ENCODE measurements at regions of chr2 and their contacts with region 1.

Region 1: GRCh38 chr2:38315707-38316333 is 61.3 kb downstream of the ATL2 start:
- DNase-seq: peak; percentile 58 to 64
- ATAC-seq: peak; percentile 93 to 94
- H3K4me3 ChIP-seq: no peak overlapping the region
- H3K27ac ChIP-seq: no peak overlapping the region
- H3K4me1 ChIP-seq: no peaks in the 10 kb centered on the region
- CTCF ChIP-seq: peak; percentile 96
- EP300 ChIP-seq: no peak
- POLR2A ChIP-seq: no peak
- RAD21 ChIP-seq: peak; percentile 86 to 92

Region 2: DNA sequence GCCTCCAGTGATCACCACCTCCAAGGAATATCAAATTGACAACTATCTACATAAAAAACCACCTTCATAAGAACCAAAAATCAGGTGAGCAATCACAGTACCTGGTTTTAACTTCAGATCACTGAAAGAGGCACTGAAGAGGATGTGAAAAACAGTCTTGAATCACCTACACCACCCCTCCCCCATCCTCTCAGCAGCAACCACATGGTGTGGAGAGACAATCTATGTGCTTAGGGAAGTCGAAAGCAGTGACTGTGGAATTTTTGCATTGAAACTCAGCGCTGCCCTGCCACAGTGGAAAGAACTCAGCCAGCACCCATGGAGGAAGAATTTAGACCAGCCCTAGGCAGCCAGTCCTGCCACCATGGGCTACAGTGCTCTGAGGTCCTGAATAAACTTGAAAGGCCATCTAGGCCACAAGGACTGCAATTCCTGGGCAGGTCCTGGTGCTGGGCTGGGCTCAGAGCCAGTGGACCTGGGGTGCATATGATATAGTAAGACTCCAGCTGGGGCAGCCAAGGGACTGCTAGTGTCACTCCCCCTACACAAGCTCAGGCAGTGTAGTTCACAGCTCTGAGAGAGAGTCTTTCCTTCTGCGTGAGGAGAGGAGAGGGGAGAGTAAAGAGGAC is 14.4 kb before region 1 on chr2:
- CTCF ChIA-PET with region 1: interaction called, 11 read pairs
- POLR2A ChIA-PET with region 1: no interaction called
- DNase-seq: no peak
- ATAC-seq: peak; percentile 19 to 59; a peak in 3 of 6 replicates
- H3K4me3 ChIP-seq: no peak overlapping the region
- H3K27ac ChIP-seq: no peak overlapping the region
- H3K4me1 ChIP-seq: peaks cover 9% of the 10 kb centered on the region
- CTCF ChIP-seq: no peak
- EP300 ChIP-seq: no peak
- POLR2A ChIP-seq: no peak
- RAD21 ChIP-seq: no peak

Region 3: DNA sequence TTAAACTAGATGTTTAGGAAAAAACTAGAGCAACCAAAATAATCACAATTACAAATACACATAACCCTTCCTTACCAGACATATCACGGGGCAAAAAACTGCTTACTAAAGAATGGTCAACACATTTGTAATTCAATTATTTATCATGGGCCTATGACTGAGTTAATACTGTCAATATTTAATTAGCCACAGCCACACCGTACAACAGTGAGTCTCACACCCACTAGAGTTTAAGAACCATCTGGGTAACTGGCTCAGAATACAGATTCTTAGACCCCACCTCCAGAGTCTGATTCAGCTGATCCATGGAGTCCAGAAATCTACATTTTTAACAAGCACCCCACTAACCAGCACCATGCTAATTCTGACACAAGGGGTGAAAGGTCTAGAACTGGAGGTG is 46.4 kb after region 1 on chr2:
- CTCF ChIA-PET with region 1: interaction called, 19 read pairs
- POLR2A ChIA-PET with region 1: no interaction called
- DNase-seq: no peak
- ATAC-seq: peak in 1 of 2 experiments; percentile 47; a peak in 3 of 6 replicates
- H3K4me3 ChIP-seq: no peak overlapping the region
- H3K27ac ChIP-seq: no peak overlapping the region
- H3K4me1 ChIP-seq: peaks cover 37% of the 10 kb centered on the region
- CTCF ChIP-seq: no peak
- EP300 ChIP-seq: no peak
- POLR2A ChIP-seq: no peak
- RAD21 ChIP-seq: no peak

Region 4: GRCh38 chr2:38446906-38447561 is 131.2 kb after region 1 on chr2:
- CTCF ChIA-PET with region 1: interaction called, 10 read pairs
- POLR2A ChIA-PET with region 1: no interaction called
- DNase-seq: no peak
- ATAC-seq: peak in 1 of 2 experiments; percentile 17; a peak in 1 of 6 replicates
- H3K4me3 ChIP-seq: no peak overlapping the region
- H3K27ac ChIP-seq: no peak overlapping the region
- H3K4me1 ChIP-seq: no peaks in the 10 kb centered on the region
- CTCF ChIP-seq: no peak
- EP300 ChIP-seq: no peak
- POLR2A ChIP-seq: no peak
- RAD21 ChIP-seq: no peak

Region 5: DNA sequence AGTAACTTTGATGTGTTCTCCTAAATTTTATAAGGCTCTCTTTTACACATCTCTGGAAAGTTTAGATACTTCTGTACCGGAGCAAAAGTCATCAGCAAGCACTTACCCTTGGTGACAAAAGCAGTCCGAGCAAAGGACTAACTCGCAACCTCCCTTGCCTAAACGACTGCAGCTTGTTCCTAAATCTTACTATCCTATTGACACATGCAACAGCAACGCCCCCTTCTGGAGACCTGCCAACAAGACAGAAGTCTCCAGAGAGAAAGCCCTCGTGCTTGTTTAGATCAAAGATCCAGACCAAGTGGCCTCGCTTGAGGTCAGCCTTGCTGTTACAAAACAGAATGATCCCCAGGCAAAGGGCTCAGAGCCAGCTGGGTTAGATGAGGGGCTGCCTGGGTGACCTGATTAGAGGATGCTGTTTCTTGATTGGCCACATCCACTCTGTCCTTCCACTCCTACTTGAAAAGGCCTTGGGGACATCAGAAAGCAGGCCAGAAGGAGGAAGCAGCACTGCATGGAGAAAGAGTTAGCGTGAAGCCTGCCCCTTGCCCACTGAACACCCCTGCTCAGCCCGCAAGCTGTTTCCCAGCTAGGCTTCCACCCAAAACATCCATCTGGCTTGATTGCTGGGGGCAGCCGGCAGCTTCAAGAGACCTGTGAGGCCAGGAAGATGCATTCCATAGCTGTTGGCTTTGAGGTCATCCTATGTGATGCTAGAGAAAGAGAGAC is 192.7 kb after region 1 on chr2:
- CTCF ChIA-PET with region 1: interaction called, 40 read pairs
- POLR2A ChIA-PET with region 1: interaction called, 3 read pairs
- DNase-seq: peak; percentile 61 to 83
- ATAC-seq: peak; percentile 38 to 79; a peak in 3 of 6 replicates
- H3K4me3 ChIP-seq: no peak overlapping the region
- H3K27ac ChIP-seq: peak overlapping the region; percentile 25 to 67
- H3K4me1 ChIP-seq: peaks cover 14% of the 10 kb centered on the region
- CTCF ChIP-seq: peak; percentile 57
- EP300 ChIP-seq: no peak
- POLR2A ChIP-seq: no peak
- RAD21 ChIP-seq: peak; percentile 65 to 78

Region 6: GRCh38 chr2:38535744-38536506 is 220.1 kb after region 1 on chr2:
- CTCF ChIA-PET with region 1: interaction called, 31 read pairs
- POLR2A ChIA-PET with region 1: no interaction called
- DNase-seq: peak; percentile 76 to 82
- ATAC-seq: peak; percentile 92 to 97
- H3K4me3 ChIP-seq: peak overlapping the region; percentile 68
- H3K27ac ChIP-seq: peak overlapping the region; percentile 71 to 86
- H3K4me1 ChIP-seq: 0 out of 3 replicates have a peak, but pooled peaks cover 3% of the 10 kb centered on the region
- CTCF ChIP-seq: peak; percentile 97
- EP300 ChIP-seq: no peak
- POLR2A ChIP-seq: no peak
- RAD21 ChIP-seq: peak; percentile 82 to 95

Measured in A549 (cell line).